CD4-positive, alpha-beta memory T cell (primary cell): ENCODE measurements at regions of chr5 and their contacts with region 1.

Region 1: GRCh38 chr5:157548513-157549297 is 26.9 kb downstream of the ADAM19 start:
- DNase-seq: no peak
- H3K4me3 ChIP-seq: no peak overlapping the region
- H3K4me3 Mint-ChIP-seq: peak overlapping the region; percentile 31 to 91 (median 79)
- H3K27ac ChIP-seq: peak overlapping the region; percentile 44
- H3K27ac Mint-ChIP-seq: peak overlapping the region; percentile 93 to 98 (median 96)
- H3K4me1 ChIP-seq: peaks cover 100% of the 10 kb centered on the region
- H3K4me1 Mint-ChIP-seq: peaks cover 79 to 94% (median 89%) of the 10 kb centered on the region in 4 donors
- H3K27me3 ChIP-seq: no peaks in the 10 kb centered on the region
- H3K27me3 Mint-ChIP-seq: no peaks in the 10 kb centered on the region

Region 2: DNA sequence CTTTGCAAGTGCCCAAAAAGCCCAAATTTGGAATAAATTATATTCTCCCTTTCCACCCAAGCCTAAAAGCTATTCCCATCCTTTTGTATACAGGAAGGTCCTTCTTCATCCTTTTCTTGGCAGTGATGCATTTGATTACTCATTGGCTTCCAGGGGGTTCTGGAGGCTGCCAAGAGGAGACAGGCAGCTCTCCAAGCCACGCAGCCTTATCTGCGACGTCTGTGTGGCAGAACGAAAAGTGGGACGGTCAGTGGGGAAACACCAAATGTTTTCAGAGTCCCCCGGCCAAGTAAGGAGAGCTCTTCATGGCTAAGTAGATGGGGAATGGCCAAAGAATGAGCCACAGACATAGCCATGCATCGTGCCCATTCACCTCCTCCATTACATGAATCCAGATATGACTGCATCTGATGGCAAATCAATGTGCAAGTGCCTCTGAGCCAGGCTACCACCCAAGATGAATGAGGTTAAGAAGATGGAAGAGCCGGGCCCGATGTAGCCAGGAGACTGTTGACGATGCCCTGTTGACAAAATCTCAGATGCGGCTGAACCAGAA is 14.7 kb after region 1 on chr5:
- CTCF ChIA-PET with region 1: interaction called, 9 read pairs
- POLR2A ChIA-PET with region 1: interaction called, 220 read pairs
- intact Hi-C with region 1: no loop called
- DNase-seq: no peak
- H3K4me3 ChIP-seq: no peak overlapping the region
- H3K4me3 Mint-ChIP-seq: peak overlapping the region in 5 of 8 donors; percentile 1 to 64 (median 55)
- H3K27ac ChIP-seq: no peak overlapping the region
- H3K27ac Mint-ChIP-seq: peak overlapping the region; percentile 25 to 89 (median 72)
- H3K4me1 ChIP-seq: peaks cover 83% of the 10 kb centered on the region
- H3K4me1 Mint-ChIP-seq: peaks cover 61 to 89% (median 76%) of the 10 kb centered on the region in 4 donors
- H3K27me3 ChIP-seq: no peaks in the 10 kb centered on the region
- H3K27me3 Mint-ChIP-seq: no peaks in the 10 kb centered on the region

Region 3: DNA sequence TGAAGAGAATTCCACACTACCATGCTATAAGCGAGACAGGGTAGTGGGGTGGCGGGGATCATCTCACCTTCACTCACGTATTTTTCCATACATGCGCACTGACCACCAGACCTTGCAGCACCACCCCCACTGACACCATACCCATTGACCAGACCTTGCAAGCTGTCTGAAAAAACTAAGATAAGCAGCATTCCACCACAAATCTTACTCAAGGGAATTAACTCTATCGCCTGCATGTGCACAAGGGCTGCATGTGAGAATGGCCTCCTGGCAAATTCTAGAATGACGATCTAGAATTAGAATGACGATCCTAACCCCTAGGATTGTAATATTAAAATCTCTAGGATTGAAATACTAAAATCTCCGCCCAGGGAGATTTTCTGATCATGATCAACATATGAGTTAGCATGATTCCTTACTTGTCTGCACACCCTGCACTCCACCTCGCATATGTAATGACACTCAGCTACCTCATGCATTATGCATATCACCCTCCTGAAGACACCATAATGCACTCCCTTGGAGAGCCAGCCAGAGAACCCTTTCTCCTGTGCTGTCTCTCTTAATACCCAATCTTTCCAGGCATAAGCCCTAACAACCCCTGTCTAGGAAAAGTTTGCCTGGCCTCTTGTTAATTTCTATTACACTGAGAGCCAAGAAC is 91.8 kb after region 1 on chr5:
- CTCF ChIA-PET with region 1: no interaction called
- POLR2A ChIA-PET with region 1: no interaction called
- intact Hi-C with region 1: no loop called
- DNase-seq: no peak
- H3K4me3 ChIP-seq: no peak overlapping the region
- H3K4me3 Mint-ChIP-seq: no peak overlapping the region
- H3K27ac ChIP-seq: no peak overlapping the region
- H3K27ac Mint-ChIP-seq: no peak overlapping the region
- H3K4me1 ChIP-seq: no peaks in the 10 kb centered on the region
- H3K4me1 Mint-ChIP-seq: peaks cover 0 to 2% (median 0%) of the 10 kb centered on the region in 4 donors
- H3K27me3 ChIP-seq: no peaks in the 10 kb centered on the region
- H3K27me3 Mint-ChIP-seq: no peaks in the 10 kb centered on the region